ENCODE measurements at regions of chr11 and their contacts with region 1.

Region 1: GRCh38 chr11:87224486-87224885 is 186.8 kb downstream of the TMEM135 start:
- DNase-seq: no peak
- H3K4me3 ChIP-seq: no peak overlapping the region
- H3K27ac ChIP-seq: no peak overlapping the region
- H3K4me1 ChIP-seq: no peaks in the 10 kb centered on the region
- H3K27me3 ChIP-seq: no peaks in the 10 kb centered on the region
- CTCF ChIP-seq: no peak

Region 2: DNA sequence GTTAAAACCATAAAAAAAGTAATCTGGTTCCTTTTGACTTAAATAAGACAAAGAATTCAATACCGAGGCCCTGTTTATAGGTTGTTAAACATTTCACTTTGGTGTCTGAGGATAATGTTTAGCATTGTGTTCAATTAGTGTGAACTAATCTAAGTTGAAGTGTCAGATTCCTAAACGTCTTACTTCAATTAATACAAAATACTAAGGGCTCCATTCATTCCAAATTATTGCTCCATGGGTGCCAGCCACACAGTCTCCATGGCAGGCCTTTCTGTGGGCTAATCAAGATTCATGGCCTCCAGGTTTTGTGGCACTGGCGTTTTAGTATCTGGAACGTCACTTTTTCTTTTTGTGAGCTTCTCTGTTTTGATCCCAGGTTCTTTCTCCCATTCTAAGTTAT is 97.4 kb before region 1 on chr11:
- CTCF ChIA-PET with region 1: interaction called, 17 read pairs
- POLR2A ChIA-PET with region 1: no interaction called
- intact Hi-C with region 1: no loop called
- DNase-seq: no peak
- H3K4me3 ChIP-seq: no peak overlapping the region
- H3K27ac ChIP-seq: no peak overlapping the region
- H3K4me1 ChIP-seq: no peaks in the 10 kb centered on the region
- H3K27me3 ChIP-seq: no peaks in the 10 kb centered on the region
- CTCF ChIP-seq: no peak

Region 3: DNA sequence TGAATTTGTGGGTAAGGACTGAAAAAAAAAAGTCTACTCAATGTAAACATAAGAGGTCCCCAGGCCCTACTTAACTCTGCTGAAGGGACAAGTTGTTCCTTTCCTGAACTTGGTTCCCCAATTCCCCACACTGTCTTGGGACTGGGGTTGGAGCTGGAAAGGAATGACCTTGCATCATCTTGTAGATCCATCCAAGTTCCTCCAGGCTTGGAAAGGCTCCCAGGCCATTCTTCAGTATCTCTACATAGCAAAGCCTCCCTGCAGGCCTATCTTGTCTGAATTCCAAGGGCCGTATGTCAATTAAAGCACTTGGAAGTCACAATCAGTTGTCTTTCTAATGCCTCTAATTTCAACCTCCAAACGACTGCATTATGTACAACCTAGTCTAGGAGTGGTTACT is 174.4 kb after region 1 on chr11:
- CTCF ChIA-PET with region 1: no interaction called
- POLR2A ChIA-PET with region 1: no interaction called
- intact Hi-C with region 1: no loop called
- DNase-seq: peak in 1 of 2 experiments; percentile 9
- H3K4me3 ChIP-seq: no peak overlapping the region
- H3K27ac ChIP-seq: no peak overlapping the region
- H3K4me1 ChIP-seq: no peaks in the 10 kb centered on the region
- H3K27me3 ChIP-seq: no peaks in the 10 kb centered on the region
- CTCF ChIP-seq: no peak

Measured in PC-9 (cell line).